ENCODE measurements at regions of chr1 and their contacts with region 1.

Region 1: DNA sequence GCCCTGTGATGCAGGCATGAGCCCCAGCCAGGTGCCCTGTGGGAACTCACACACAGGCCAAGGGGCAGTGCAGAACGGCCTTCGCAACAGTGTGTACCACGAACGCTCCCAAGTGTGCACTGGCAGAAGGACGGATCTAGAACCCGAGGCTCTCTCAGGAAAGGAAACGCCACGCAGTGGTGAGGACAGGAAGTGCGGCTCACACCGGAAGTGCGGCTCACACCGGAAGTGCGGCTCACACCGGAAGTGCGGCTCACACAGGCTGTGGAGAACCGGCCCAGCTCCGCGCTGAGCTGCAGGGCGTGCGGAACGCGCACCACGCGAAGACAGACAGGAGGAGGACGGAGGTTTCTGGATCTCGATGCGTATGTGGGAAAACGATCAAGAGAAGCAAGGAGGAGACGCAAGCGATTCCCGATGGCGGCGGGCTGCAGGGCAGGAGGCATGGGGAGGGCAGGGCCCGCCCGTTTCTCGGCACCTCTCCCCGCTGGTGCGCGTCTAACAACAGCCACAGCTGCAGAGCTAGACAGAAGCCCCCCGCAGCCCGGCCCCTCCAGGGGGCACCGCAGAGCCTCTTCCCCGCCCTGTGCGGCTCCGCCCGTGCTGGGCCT is 35.9 kb upstream of the TMEM52 start:
- DNase-seq: no peak
- H3K4me3 ChIP-seq: no peak overlapping the region
- H3K27ac ChIP-seq: no peak overlapping the region
- H3K4me1 ChIP-seq: peaks cover 0 to 3% (median under 1%) of the 10 kb centered on the region in 4 experiments; a peak in 4 of 7 replicates
- H3K27me3 ChIP-seq: no peaks in the 10 kb centered on the region; a peak in 1 of 7 replicates
- CTCF ChIP-seq: peak in 2 of 3 experiments; percentile 50 to 51; a peak in 2 of 4 replicates
- EP300 ChIP-seq: no peak
- POLR2A ChIP-seq: no peak
- RAD21 ChIP-seq: 0 out of 4 replicates have a peak, but pooled peaks of 1 of the 2 experiments have one; percentile 5

Region 2: DNA sequence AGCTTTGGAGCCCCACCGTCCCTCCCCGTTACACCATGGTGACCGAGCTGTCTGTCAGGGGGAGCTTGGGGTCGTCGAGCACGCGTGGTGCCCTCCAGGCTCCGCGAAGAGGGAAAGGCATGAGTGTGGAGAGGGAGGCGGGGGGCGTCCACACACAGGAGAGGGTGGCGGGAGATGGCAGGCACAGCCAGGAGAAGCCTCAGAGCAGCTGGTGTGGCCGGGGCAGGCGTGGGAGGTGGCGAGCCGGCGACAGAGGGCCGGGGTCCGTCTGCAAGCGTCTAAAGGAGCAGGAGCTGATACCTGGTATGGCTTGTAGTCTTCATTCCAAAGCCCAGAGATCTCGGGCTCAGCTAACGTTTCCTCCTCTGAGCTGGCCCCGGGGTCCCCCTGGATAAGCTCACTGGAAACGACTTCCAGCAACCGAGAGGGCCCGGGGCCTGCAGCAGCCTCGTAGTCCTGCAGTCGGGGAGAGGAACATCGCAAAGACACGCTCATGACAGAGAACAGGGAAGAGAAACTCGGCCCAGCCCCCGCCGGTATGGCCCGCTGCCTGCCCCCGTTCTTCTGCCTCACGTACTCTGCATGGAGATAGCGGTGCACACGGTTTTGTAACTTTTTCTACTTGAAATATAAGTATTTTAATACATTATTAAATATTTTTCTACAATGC is 11.3 kb after region 1 on chr1:
- CTCF ChIA-PET with region 1: interaction called, 29 read pairs
- POLR2A ChIA-PET with region 1: no interaction called
- DNase-seq: no peak
- H3K4me3 ChIP-seq: no peak overlapping the region
- H3K27ac ChIP-seq: no peak overlapping the region
- H3K4me1 ChIP-seq: peaks cover 0 to 3% (median 3%) of the 10 kb centered on the region in 4 experiments; a peak in 4 of 7 replicates
- H3K27me3 ChIP-seq: no peaks in the 10 kb centered on the region
- CTCF ChIP-seq: no peak
- EP300 ChIP-seq: no peak
- POLR2A ChIP-seq: no peak
- RAD21 ChIP-seq: no peak

Region 3: GRCh38 chr1:2049718-2050427 is 94.9 kb after region 1 on chr1 and contains the start of gene PRKCZ:
- CTCF ChIA-PET with region 1: interaction called, 249 read pairs
- POLR2A ChIA-PET with region 1: interaction called, 4 read pairs
- DNase-seq: peak; percentile 71 to 97
- H3K4me3 ChIP-seq: peak within 1 kb of the TSS; percentile 79 to 83 (median 80)
- H3K27ac ChIP-seq: peak within 1 kb of the TSS; percentile 76
- H3K4me1 ChIP-seq: peaks cover 0 to 28% (median 20%) of the 10 kb centered on the region in 4 experiments; a peak in 6 of 7 replicates
- H3K27me3 ChIP-seq: peaks cover 0 to 3% (median 0%) of the 10 kb centered on the region in 4 experiments; a peak in 2 of 7 replicates
- CTCF ChIP-seq: no peak
- EP300 ChIP-seq: no peak
- POLR2A ChIP-seq: peak in 1 of 2 experiments; percentile 66; a peak in 1 of 3 replicates
- RAD21 ChIP-seq: no peak
- total RNA-seq, gene PRKCZ: 45.1 and 49.4 TPM in 2 replicates

Measured in H1 (cell line).